SK-N-SH (cell line): ENCODE measurements at regions of chr16 and their contacts with region 1.

Region 1: GRCh38 chr16:55370762-55371482 is 46.9 kb downstream of the IRX6 start:
- DNase-seq: peak; percentile 71
- H3K4me3 ChIP-seq: no peak overlapping the region; a peak in 1 of 4 replicates
- H3K27ac ChIP-seq: no peak overlapping the region
- H3K4me1 ChIP-seq: peaks cover 19 to 25% of the 10 kb centered on the region in 2 experiments; a peak in 3 of 4 replicates
- H3K27me3 ChIP-seq: peaks cover 9% of the 10 kb centered on the region; the same call in 1 of the 2 replicates
- CTCF ChIP-seq: peak; percentile 45
- EP300 ChIP-seq: no peak
- RAD21 ChIP-seq: peak; percentile 95

Region 2: GRCh38 chr16:53773150-53773846 is 1597.6 kb before region 1 on chr16:
- CTCF ChIA-PET with region 1: interaction called, 11 read pairs
- POLR2A ChIA-PET with region 1: no interaction called
- DNase-seq: peak; percentile 52
- H3K4me3 ChIP-seq: no peak overlapping the region
- H3K27ac ChIP-seq: peak overlapping the region in 1 of 2 experiments; percentile 22; a peak in 1 of 4 replicates
- H3K4me1 ChIP-seq: peaks cover 12 to 51% of the 10 kb centered on the region in 2 experiments
- H3K27me3 ChIP-seq: no peaks in the 10 kb centered on the region
- CTCF ChIP-seq: peak; percentile 82
- EP300 ChIP-seq: no peak
- RAD21 ChIP-seq: peak; percentile 91

Region 3: GRCh38 chr16:54936101-54936978 is 434.6 kb before region 1 on chr16:
- CTCF ChIA-PET with region 1: interaction called, 14 read pairs
- POLR2A ChIA-PET with region 1: no interaction called
- DNase-seq: no peak
- H3K4me3 ChIP-seq: no peak overlapping the region
- H3K27ac ChIP-seq: no peak overlapping the region
- H3K4me1 ChIP-seq: peaks cover 0 to 7% of the 10 kb centered on the region in 2 experiments; a peak in 1 of 4 replicates
- H3K27me3 ChIP-seq: no peaks in the 10 kb centered on the region
- CTCF ChIP-seq: no peak
- EP300 ChIP-seq: no peak
- RAD21 ChIP-seq: no peak

Region 4: DNA sequence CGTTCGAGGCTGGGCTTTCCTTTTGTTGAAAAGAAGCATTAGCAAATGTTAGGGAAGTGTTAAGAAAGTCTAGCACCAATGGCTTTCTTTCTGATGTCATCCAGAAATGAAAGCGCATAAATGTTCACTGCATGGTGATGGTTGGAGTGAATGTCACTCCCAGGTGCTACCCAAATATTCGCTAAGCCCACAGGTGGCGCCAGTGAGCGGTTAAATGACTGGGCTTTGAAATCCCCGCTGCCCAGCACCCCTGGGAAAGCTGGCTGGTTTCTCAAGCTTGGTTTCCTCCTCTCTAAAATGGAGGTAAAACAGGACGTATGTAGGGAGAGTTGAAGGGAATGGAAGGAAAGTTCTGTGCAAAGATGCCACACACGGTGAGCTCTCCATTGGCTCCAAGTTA is 335.9 kb before region 1 on chr16:
- CTCF ChIA-PET with region 1: interaction called, 25 read pairs
- POLR2A ChIA-PET with region 1: no interaction called
- DNase-seq: peak; percentile 73
- H3K4me3 ChIP-seq: 0 out of 4 replicates have a peak overlapping the region, but pooled peaks of 1 of the 2 experiments have one; percentile 32
- H3K27ac ChIP-seq: no peak overlapping the region
- H3K4me1 ChIP-seq: peaks cover 0 to 5% of the 10 kb centered on the region in 2 experiments; a peak in 2 of 4 replicates
- H3K27me3 ChIP-seq: no peaks in the 10 kb centered on the region
- CTCF ChIP-seq: peak; percentile 52
- EP300 ChIP-seq: no peak
- RAD21 ChIP-seq: peak; percentile 68

Region 5: GRCh38 chr16:55120408-55120807 is 250.5 kb before region 1 on chr16:
- CTCF ChIA-PET with region 1: interaction called, 42 read pairs
- POLR2A ChIA-PET with region 1: no interaction called
- DNase-seq: peak; percentile 50
- H3K4me3 ChIP-seq: no peak overlapping the region
- H3K27ac ChIP-seq: no peak overlapping the region
- H3K4me1 ChIP-seq: peaks cover 0 to 10% of the 10 kb centered on the region in 2 experiments; a peak in 1 of 4 replicates
- H3K27me3 ChIP-seq: no peaks in the 10 kb centered on the region
- CTCF ChIP-seq: no peak
- EP300 ChIP-seq: no peak
- RAD21 ChIP-seq: peak; percentile 79

Region 6: GRCh38 chr16:55357241-55357640 is 13.7 kb before region 1 on chr16:
- CTCF ChIA-PET with region 1: interaction called, 13 read pairs
- POLR2A ChIA-PET with region 1: no interaction called
- DNase-seq: no peak
- H3K4me3 ChIP-seq: no peak overlapping the region
- H3K27ac ChIP-seq: no peak overlapping the region
- H3K4me1 ChIP-seq: no peaks in the 10 kb centered on the region
- H3K27me3 ChIP-seq: no peaks in the 10 kb centered on the region
- CTCF ChIP-seq: no peak
- EP300 ChIP-seq: no peak
- RAD21 ChIP-seq: no peak